ENCODE measurements at regions of chr20 and their contacts with region 1.

Region 1: DNA sequence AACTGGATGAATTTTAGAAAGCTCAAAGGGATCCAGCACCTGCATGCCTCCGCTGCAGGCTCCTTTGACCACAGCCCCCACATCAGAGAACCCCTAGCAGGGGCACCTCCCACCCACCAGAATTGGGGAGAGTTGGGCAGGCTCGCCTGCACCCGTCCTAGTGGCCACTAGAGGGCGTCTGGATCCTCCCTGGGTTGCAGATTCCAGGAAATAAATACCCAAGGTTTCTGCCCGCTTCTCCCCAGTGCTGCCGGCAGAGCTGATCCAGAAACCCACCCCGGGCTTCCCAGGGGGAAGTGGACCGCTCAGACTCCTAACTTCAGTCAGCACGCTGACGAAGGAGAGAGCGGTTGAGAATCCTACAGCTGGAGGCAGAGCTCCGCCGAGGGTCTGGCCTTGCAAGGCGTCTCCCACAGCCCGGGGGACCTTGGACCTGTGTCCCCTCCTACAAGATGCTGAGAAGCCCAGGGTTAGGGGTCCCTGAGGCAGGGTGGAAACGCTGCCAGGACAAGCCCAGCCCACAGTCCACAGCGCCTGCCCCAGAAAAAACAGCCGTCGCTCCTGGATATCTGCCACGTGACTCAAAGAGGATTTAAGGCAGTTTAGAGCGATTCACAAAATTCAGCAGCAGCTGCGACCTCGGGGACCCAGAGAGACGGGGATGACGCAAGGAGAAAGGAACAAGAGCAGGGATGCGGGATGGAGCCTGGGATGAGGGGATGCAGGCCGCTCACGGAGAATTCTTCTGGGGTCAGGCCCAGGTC is 32.6 kb upstream of the PHACTR3 start:
- DNase-seq: peak in 9 of 10 donors; percentile 62 to 83 (median 71)
- H3K4me3 ChIP-seq: peak overlapping the region; percentile 28 to 81 (median 63)
- H3K27ac ChIP-seq: peak overlapping the region in 50 of 59 donors; percentile 7 to 90 (median 80)
- H3K27me3 ChIP-seq: peaks cover 0 to 12% (median 0%) of the 10 kb centered on the region in 45 donors
- CTCF ChIP-seq: peak; percentile 81 to 98 (median 95)

Region 2: GRCh38 chr20:59645761-59646171 is 74.0 kb after region 1 on chr20:
- intact Hi-C with region 1: no loop called
- DNase-seq: peak in 3 of 10 donors; percentile 52 to 71 (median 61)
- H3K4me3 ChIP-seq: peak overlapping the region in 27 of 59 donors; percentile 1 to 46 (median 25)
- H3K27ac ChIP-seq: peak overlapping the region; percentile 70 to 96 (median 92)
- H3K27me3 ChIP-seq: no peaks in the 10 kb centered on the region
- CTCF ChIP-seq: peak; percentile 6 to 82 (median 62)

Region 3: GRCh38 chr20:59751056-59751688 is 179.4 kb after region 1 on chr20:
- intact Hi-C with region 1: loop called (anchors 1 to 5 kb)
- DNase-seq: peak; percentile 79 to 93 (median 86)
- H3K4me3 ChIP-seq: peak overlapping the region in 20 of 59 donors; percentile 4 to 48 (median 28)
- H3K27ac ChIP-seq: peak overlapping the region in 49 of 59 donors; percentile 6 to 82 (median 61)
- H3K27me3 ChIP-seq: no peaks in the 10 kb centered on the region
- CTCF ChIP-seq: peak; percentile 66 to 97 (median 92)

Region 4: DNA sequence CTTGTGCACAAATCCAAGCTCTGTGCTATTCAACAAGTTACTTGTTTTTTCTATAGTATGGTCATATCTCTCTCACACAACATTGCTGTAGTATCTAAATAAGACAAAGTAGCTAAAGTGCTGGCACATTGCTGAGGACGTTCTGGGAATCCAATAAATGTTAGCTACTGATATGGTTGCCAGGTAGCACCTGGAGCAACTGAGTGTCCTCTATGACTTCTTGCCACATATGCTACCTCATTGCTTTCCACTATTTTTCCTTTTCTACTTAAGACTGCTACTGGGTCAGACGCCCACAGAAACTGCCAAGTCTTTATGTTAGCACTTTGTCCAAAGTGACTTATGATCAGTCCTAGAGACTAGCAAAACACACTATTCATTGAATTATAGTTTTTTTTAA is 276.4 kb after region 1 on chr20:
- intact Hi-C with region 1: loop called in 1 of 2 experiments (anchors 10 kb)
- DNase-seq: no peak
- H3K4me3 ChIP-seq: no peak overlapping the region
- H3K27ac ChIP-seq: peak overlapping the region in 1 of 59 donors; percentile 2
- H3K27me3 ChIP-seq: no peaks in the 10 kb centered on the region
- CTCF ChIP-seq: no peak

Measured in dorsolateral prefrontal cortex (tissue), 120 donors.